ENCODE measurements at regions of chr1 and their contacts with region 1.

Region 1: GRCh38 chr1:112715264-112716053 is at the start of gene PPM1J:
- DNase-seq: peak; percentile 99 to 100 (median 100)
- ATAC-seq: peak; percentile 93
- H3K4me3 ChIP-seq: peak within 1 kb of the TSS; percentile 59
- H3K27ac ChIP-seq: no peak within 1 kb of the TSS
- H3K4me1 ChIP-seq: peaks cover 17 to 37% of the 10 kb centered on the region in 2 experiments; a peak in 4 of 5 replicates
- H3K27me3 ChIP-seq: peaks cover 5 to 16% of the 10 kb centered on the region in 2 experiments; a peak in 4 of 5 replicates
- CTCF ChIP-seq: 0 out of 6 replicates have a peak, but pooled peaks of 1 of the 3 experiments have one; percentile 2
- EP300 ChIP-seq: no peak
- POLR2A ChIP-seq: no peak
- RAD21 ChIP-seq: no peak
- polyA plus RNA-seq, gene PPM1J: 0.25 to 0.31 TPM

Region 2: DNA sequence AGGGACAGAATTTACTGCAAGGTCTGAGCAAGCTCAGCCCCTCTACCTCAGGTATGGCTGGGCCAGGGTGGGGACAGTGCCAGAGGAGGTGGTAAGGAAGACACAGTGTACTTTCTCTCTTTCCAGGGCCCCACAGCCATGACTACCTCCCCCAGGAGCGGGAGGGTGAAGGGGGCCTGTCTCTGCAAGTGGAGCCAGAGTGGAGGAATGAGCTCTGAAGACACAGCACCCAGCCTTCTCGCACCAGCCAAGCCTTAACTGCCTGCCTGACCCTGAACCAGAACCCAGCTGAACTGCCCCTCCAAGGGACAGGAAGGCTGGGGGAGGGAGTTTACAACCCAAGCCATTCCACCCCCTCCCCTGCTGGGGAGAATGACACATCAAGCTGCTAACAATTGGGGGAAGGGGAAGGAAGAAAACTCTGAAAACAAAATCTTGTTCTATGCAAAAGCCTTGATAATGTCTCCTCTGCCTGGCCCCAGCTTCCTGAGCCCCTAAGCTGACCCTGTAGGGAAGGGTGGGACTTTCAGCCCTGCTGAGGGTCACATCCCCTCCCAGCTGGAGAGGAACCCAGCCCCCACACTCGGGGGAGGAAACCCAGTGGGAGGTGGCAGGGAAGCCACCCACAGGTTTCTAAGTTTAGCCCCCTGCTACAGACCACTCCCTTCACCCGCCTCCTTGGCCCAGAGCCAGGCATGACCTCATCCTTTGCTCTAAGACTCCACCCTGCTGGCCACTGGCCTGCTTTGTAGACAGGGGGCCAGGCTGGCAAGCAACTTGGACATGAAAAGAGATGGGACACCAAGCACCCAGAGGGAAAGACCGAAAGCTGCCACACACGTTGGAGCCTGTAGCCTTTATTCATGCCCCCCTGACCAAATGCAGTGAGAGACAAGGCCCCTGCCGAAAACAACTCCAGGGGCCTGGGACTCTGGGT is 14.9 kb before region 1 on chr1:
- CTCF ChIA-PET with region 1: no interaction called
- POLR2A ChIA-PET with region 1: interaction called, 15 read pairs
- in situ Hi-C with region 1: no loop called
- intact Hi-C with region 1: no loop called
- DNase-seq: peak; percentile 94 to 100 (median 96)
- ATAC-seq: peak; percentile 77
- H3K4me3 ChIP-seq: peak overlapping the region; percentile 4; the same call in 1 of the 2 replicates
- H3K27ac ChIP-seq: peak overlapping the region; percentile 97
- H3K4me1 ChIP-seq: peaks cover 87 to 89% of the 10 kb centered on the region in 2 experiments
- H3K27me3 ChIP-seq: no peaks in the 10 kb centered on the region
- CTCF ChIP-seq: peak in 2 of 3 experiments; percentile 30 to 35; a peak in 3 of 6 replicates
- EP300 ChIP-seq: peak; percentile 88
- POLR2A ChIP-seq: peak; percentile 77
- RAD21 ChIP-seq: no peak; a peak in 2 of 4 replicates

Region 3: GRCh38 chr1:112809253-112809684 is 93.8 kb after region 1 on chr1:
- CTCF ChIA-PET with region 1: interaction called, 109 read pairs
- POLR2A ChIA-PET with region 1: interaction called, 6 read pairs
- in situ Hi-C with region 1: loop called (anchors 5 kb)
- intact Hi-C with region 1: loop called (anchors 1 kb)
- DNase-seq: peak; percentile 78 to 88 (median 82)
- ATAC-seq: peak; percentile 97
- H3K4me3 ChIP-seq: no peak overlapping the region
- H3K27ac ChIP-seq: no peak overlapping the region
- H3K4me1 ChIP-seq: peaks cover 2 to 6% of the 10 kb centered on the region in 2 experiments; a peak in 3 of 5 replicates
- H3K27me3 ChIP-seq: peaks cover 19 to 20% of the 10 kb centered on the region in 2 experiments; a peak in 4 of 5 replicates
- CTCF ChIP-seq: peak; percentile 89 to 98 (median 95)
- EP300 ChIP-seq: no peak
- POLR2A ChIP-seq: no peak
- RAD21 ChIP-seq: peak; percentile 94 to 98

Region 4: DNA sequence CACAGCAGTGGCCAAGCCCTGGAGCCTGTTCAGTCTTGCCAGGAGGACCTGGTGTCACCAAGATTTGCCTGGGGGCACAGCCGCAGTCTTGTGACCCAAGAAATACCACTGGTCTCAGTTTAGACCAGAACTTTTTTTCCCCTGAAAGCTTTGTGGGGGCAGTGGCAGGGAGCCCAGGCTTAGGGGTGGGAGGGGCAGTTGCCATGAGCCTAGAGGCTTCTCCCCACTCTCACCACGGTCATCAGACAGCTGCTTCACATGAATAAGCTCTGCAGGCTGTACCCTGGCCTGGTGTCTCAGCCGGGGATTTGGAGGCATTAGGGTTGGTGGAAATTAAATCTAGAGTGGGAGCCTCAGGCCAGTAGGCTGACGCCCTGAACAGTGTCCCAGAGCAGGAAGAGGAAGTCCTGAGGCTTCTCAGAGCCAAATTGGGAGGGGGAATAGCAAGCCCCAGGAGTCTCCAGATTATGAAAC is 166.8 kb after region 1 on chr1:
- CTCF ChIA-PET with region 1: no interaction called
- POLR2A ChIA-PET with region 1: interaction called, 3 read pairs
- in situ Hi-C with region 1: no loop called
- intact Hi-C with region 1: loop called (anchors 2 kb)
- DNase-seq: no peak
- ATAC-seq: peak; percentile 13
- H3K4me3 ChIP-seq: no peak overlapping the region
- H3K27ac ChIP-seq: peak overlapping the region; percentile 34; the same call in 2 of the 3 replicates
- H3K4me1 ChIP-seq: peaks cover 28 to 31% of the 10 kb centered on the region in 2 experiments
- H3K27me3 ChIP-seq: peaks cover 0 to 4% of the 10 kb centered on the region in 2 experiments; a peak in 1 of 5 replicates
- CTCF ChIP-seq: no peak
- EP300 ChIP-seq: no peak
- POLR2A ChIP-seq: no peak
- RAD21 ChIP-seq: no peak

Region 5: GRCh38 chr1:113042285-113043143 is 327.1 kb after region 1 on chr1:
- CTCF ChIA-PET with region 1: interaction called, 7 read pairs
- POLR2A ChIA-PET with region 1: no interaction called
- in situ Hi-C with region 1: loop called (anchors 5 kb)
- intact Hi-C with region 1: loop called (anchors 1 kb)
- DNase-seq: peak; percentile 85 to 96 (median 90)
- ATAC-seq: peak; percentile 97
- H3K4me3 ChIP-seq: no peak overlapping the region
- H3K27ac ChIP-seq: peak overlapping the region; percentile 72
- H3K4me1 ChIP-seq: peaks cover 18 to 49% of the 10 kb centered on the region in 2 experiments
- H3K27me3 ChIP-seq: no peaks in the 10 kb centered on the region
- CTCF ChIP-seq: peak; percentile 90 to 98 (median 93)
- EP300 ChIP-seq: peak; percentile 73
- POLR2A ChIP-seq: no peak
- RAD21 ChIP-seq: peak; percentile 98

Region 6: GRCh38 chr1:113140588-113141446 is 425.4 kb after region 1 on chr1:
- CTCF ChIA-PET with region 1: no interaction called
- POLR2A ChIA-PET with region 1: no interaction called
- in situ Hi-C with region 1: no loop called
- intact Hi-C with region 1: loop called (anchors 10 kb)
- DNase-seq: peak; percentile 69 to 88 (median 78)
- ATAC-seq: peak; percentile 89
- H3K4me3 ChIP-seq: no peak overlapping the region
- H3K27ac ChIP-seq: peak overlapping the region; percentile 73
- H3K4me1 ChIP-seq: peaks cover 9 to 37% of the 10 kb centered on the region in 2 experiments
- H3K27me3 ChIP-seq: no peaks in the 10 kb centered on the region
- CTCF ChIP-seq: peak; percentile 86 to 97 (median 97)
- EP300 ChIP-seq: peak; percentile 6; the same call in 1 of the 2 replicates
- POLR2A ChIP-seq: no peak
- RAD21 ChIP-seq: peak; percentile 97

Measured in K562 (cell line).